Upper lobe of right lung (tissue), 1 donor: ENCODE measurements at regions of chr1 and their contacts with region 1.

Region 1: GRCh38 chr1:201792534-201793305 is 36.2 kb upstream of the IPO9 start:
- DNase-seq: peak; percentile 73
- ATAC-seq: peak; percentile 97
- H3K4me3 ChIP-seq: no peak overlapping the region
- H3K27ac ChIP-seq: peak overlapping the region; percentile 64
- H3K4me1 ChIP-seq: peaks cover 39% of the 10 kb centered on the region
- H3K27me3 ChIP-seq: no peaks in the 10 kb centered on the region
- CTCF ChIP-seq: peak; percentile 96

Region 2: DNA sequence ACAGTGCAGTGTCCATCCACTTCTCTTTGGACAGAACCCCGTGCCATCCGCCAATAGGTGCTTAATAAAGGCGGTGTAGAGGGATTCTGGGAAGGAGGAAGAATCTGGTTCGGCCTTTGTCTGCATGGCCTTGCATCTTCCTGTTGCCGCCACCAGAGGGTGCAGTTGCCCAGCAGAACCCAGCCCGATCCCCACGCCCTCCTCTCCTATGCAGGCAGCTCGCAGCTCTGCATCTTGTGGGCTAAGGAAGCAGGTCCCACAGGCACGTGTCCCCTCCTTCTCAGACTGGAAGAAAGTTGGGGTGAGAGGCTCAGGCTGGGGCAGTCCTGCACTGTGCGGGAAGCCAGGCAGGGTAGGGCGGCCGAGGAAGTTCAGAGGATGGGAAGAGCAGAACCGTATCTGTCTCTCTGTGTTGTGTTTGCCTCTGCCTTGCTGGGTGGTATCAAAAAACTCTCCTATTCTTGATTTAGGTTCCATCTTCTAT is 233.0 kb before region 1 on chr1:
- intact Hi-C with region 1: loop called (anchors 5 kb)
- DNase-seq: peak; percentile 87
- ATAC-seq: peak; percentile 97
- H3K4me3 ChIP-seq: no peak overlapping the region
- H3K27ac ChIP-seq: no peak overlapping the region
- H3K4me1 ChIP-seq: peaks cover 17% of the 10 kb centered on the region
- H3K27me3 ChIP-seq: no peaks in the 10 kb centered on the region
- CTCF ChIP-seq: peak; percentile 94

Region 3: DNA sequence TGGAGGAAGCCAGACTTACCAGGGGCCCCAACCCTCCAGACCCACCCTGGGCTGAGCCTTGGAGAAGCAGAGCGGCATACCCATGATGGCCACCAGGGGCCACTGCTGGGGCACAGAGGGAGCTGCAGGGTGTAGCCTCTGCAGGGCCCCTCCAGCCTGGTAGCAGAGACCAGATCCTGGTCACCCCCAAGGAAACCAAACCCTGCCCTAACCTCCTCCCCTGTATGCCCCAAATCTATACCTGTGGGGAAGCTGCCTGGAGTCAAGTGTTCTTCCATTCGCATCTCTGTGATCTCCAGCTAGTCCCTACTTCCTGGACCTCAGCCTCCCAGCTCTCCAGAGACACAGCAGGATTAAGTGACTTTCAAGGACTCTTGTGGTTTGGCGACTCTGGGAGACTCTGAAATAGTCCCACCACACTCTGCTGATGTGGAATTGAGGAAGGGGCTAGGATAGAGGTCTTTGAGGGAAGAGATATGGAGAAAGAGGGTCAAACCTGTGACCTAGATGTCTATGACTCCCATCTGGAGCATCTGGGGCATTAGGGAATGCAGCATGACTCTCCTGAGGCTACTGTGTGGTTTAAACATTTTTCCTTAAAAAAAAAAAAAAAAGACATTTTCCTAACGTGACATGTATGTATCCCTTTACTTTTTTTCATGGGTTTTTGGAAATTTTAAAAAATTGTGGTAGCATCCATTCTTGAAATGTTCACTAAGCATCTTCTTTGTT is 83.0 kb before region 1 on chr1:
- intact Hi-C with region 1: loop called (anchors 2 kb)
- DNase-seq: peak; percentile 87
- ATAC-seq: peak; percentile 82
- H3K4me3 ChIP-seq: no peak overlapping the region
- H3K27ac ChIP-seq: no peak overlapping the region
- H3K4me1 ChIP-seq: peaks cover 43% of the 10 kb centered on the region
- H3K27me3 ChIP-seq: no peaks in the 10 kb centered on the region
- CTCF ChIP-seq: peak; percentile 95

Region 4: DNA sequence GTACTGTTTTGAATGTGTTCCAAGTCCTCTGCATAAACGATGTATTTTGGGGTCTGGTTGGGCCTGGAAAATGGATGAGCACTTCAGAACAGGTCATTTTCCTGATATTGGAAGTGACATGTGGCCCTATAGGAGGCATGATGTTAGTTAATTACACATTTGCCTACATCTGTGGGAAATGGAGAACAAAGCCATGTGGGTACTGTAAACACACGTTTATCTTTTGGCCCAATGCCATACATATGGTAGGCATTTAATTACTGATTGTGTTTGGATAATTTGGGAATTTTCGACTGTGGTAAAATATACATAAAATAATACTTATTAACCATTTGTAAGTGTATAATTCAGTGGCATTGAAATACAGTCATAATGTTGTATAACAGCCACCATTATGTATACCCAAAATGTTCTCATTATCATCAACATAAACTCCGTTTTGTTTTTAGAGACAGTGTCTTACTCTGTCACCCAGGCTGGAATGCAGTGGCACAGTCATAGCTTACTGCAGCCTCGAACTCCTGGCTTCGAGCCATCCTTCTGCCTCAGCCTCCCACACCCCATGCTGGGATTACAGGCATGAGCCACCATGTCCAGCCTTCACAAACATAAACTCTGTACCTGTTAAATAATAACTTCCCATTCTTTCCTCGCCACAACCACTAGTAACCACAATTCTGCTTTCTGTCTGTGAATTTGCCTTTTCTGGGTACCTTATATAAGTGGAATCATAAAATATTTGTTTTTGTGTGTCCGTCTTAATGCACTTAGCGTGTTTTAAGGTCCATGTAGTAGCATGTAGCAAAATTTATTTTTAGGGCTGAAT is 177.8 kb after region 1 on chr1:
- intact Hi-C with region 1: no loop called
- DNase-seq: no peak
- ATAC-seq: no peak
- H3K4me3 ChIP-seq: no peak overlapping the region
- H3K27ac ChIP-seq: no peak overlapping the region
- H3K4me1 ChIP-seq: no peaks in the 10 kb centered on the region
- H3K27me3 ChIP-seq: no peaks in the 10 kb centered on the region
- CTCF ChIP-seq: no peak